ENCODE measurements at regions of chr3 and their contacts with region 1.

Region 1: DNA sequence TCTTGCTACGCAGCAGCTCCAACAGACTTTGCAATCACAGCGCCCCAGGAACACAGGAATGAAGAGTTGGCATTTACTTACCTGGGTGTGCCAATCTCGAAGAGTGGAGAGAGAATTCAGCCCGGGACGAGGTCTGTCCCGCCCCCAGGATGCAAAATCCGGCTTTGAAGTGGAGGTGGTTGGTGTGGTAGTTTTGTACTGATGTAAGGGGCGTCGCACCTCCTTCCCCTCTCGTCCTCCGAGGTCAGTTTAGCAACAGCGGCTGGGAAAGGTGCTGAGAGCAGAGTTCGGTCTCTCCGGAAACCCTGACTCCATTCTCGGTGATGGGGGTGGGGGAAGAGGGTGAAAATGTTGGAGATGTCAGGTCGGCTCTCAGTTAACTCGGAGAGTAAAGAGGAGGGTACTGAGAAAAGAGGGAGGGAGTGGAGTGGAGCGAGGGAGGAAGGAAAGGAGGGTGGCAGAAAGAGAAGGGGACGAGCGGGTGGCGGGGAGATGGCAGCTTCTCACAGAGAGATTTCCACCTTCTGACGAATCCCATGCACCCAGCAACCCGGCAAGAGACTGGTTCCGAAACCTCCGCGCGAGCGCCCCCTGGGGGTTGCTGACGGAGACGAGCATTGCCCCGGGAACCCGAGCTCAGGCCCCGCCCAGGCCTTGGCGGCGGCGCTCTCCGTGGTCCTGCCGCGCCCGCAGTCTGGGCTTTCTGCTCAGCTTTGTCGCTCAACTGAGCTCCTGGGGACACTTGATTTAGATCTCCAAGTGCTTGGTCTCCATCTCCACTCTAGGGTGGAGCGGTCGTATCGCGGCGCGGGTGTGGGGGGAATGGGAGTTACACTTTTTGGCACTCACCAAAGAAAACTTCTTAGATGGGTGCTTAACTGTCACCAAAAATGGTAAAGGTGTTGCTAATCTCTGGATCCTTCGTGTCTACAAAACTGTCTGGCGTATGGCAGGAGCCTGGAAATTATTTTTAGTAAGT is at the start of gene CPNE4:
- DNase-seq: peak; percentile 21
- H3K4me3 ChIP-seq: peak within 1 kb of the TSS; percentile 38; the same call in 1 of the 2 replicates
- H3K27ac ChIP-seq: no peak within 1 kb of the TSS
- H3K27me3 ChIP-seq: peaks cover 19% of the 10 kb centered on the region
- CTCF ChIP-seq: peak; percentile 85
- polyA plus RNA-seq, gene CPNE4: 0.25 TPM in 1 of 2 replicates, not detected in the other

Region 2: GRCh38 chr3:131568460-131568859 is 466.3 kb before region 1 on chr3:
- CTCF ChIA-PET with region 1: no interaction called
- POLR2A ChIA-PET with region 1: no interaction called
- DNase-seq: no peak
- H3K4me3 ChIP-seq: no peak overlapping the region
- H3K27ac ChIP-seq: no peak overlapping the region
- H3K27me3 ChIP-seq: no peaks in the 10 kb centered on the region
- CTCF ChIP-seq: no peak

Region 3: DNA sequence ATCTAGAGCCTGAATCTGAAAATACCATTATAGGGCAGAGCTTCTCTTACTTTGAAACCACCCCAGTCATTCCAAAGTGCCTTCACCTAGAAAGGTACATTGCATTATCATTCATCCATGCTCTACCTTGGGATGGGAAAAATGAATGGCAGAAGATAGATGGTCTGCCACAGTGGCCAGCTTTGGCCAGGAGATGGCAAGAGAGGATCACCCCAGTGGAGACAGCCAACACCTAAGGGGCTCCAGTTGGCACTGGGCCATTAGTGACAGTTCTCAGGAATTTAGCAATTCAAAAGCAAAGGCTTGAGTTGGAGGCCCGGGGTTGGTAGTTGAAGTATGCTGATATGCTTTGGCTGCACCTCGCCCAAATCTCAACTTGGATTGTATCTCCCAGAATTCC is 278.4 kb before region 1 on chr3:
- CTCF ChIA-PET with region 1: no interaction called
- POLR2A ChIA-PET with region 1: no interaction called
- DNase-seq: no peak
- H3K4me3 ChIP-seq: no peak overlapping the region
- H3K27ac ChIP-seq: no peak overlapping the region
- H3K27me3 ChIP-seq: no peaks in the 10 kb centered on the region
- CTCF ChIP-seq: no peak

Region 4: DNA sequence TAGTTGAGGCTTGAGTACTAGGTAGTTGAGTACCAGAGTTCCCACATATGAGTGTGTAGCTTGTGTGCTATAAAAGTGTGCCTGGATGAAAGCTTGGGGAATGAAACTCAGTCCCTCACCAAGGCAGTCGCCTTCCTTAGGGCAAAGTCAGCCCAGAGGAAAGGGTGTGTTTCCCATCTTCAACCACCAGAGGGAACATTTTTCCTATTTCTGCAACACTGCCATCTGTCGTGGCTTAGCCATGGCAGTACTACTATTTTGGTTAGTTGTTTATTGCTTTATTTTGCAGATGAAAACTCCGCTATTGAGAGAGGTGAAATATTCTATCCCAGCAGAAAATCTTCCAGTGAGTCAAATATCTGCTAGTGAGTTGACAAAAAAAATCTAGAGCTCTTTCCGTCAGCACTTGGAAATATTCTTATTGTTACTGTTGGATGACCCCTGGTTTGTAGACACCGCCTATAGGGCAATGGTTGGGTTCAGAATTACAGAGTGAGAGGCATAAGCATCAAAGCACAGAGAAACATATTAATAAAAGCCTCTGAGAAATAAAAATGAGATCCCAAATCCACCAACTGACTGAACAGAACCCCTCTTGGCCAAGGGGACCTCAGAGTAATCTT is 239.9 kb before region 1 on chr3:
- CTCF ChIA-PET with region 1: interaction called, 264 read pairs
- POLR2A ChIA-PET with region 1: no interaction called
- DNase-seq: peak; percentile 36
- H3K4me3 ChIP-seq: no peak overlapping the region
- H3K27ac ChIP-seq: no peak overlapping the region
- H3K27me3 ChIP-seq: peaks cover 2% of the 10 kb centered on the region
- CTCF ChIP-seq: peak; percentile 93

Region 5: DNA sequence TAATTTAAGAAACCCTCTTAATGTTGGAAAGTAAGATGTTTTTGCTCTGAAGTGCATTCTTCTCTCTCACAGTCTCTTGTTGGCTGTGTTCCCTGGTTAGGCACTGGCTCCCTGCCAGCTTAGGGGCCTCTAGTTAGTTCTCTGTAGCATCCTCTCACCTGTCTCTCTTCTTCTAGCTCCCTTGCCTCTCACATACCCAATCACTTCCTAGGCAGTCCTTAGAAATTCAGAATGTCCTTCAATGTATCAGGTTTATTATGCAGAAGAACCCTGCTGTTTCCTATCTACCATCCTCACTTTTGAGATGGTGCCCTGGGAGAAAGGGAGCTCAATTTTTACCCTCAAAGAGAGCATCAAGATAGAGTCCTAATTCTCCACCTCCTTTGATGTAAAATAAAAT is 36.3 kb after region 1 on chr3:
- CTCF ChIA-PET with region 1: interaction called, 10 read pairs
- POLR2A ChIA-PET with region 1: no interaction called
- DNase-seq: no peak
- H3K4me3 ChIP-seq: no peak overlapping the region
- H3K27ac ChIP-seq: no peak overlapping the region
- H3K27me3 ChIP-seq: peaks cover 3% of the 10 kb centered on the region
- CTCF ChIP-seq: no peak

Region 6: GRCh38 chr3:132161608-132162007 is 126.8 kb after region 1 on chr3:
- CTCF ChIA-PET with region 1: interaction called, 15 read pairs
- POLR2A ChIA-PET with region 1: no interaction called
- DNase-seq: no peak
- H3K4me3 ChIP-seq: no peak overlapping the region
- H3K27ac ChIP-seq: no peak overlapping the region
- H3K27me3 ChIP-seq: no peaks in the 10 kb centered on the region
- CTCF ChIP-seq: no peak

Region 7: DNA sequence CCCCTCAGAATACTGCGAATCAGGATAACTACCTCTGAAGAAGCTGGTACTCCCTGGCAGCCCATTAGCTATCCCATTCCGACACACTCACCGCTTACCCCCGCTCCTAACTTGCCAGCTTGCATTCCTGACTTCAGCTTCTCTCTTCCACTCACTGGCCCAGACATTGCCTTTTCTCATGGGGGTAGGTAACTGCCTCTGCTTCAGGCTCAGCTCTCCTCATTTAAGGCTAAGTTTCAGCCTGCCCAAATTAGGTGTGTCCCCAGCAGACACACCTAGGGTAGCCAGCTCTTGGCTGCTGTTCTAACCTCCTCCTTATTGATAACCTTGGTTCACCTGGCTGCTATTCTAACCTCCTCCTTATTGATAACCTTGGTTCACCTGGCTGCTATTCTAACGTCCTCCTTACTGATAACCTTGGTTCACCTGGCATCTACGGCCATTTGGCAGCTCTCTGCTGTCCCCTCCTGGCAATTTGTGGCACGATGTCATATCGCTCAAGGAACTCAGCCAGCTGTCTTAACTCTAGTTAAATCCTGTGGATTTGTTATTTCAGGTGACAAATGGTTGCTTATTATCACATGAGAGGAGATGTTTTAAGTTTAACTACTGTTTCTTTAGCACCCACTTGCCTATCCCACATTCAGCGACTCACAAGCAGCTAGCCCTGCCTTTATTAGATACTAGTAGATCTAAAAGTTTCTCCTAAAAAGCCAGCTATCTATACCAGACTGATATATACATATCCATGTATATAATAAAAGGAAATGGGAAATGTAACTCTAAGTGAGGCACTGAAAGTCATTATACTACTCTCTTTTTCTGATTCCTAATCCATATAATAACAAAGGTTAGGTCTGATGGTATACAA is 175.9 kb after region 1 on chr3:
- CTCF ChIA-PET with region 1: interaction called, 11 read pairs
- POLR2A ChIA-PET with region 1: no interaction called
- DNase-seq: no peak
- H3K4me3 ChIP-seq: no peak overlapping the region
- H3K27ac ChIP-seq: no peak overlapping the region
- H3K27me3 ChIP-seq: no peaks in the 10 kb centered on the region
- CTCF ChIP-seq: peak; percentile 36